HAP-1 (cell line): ENCODE measurements at regions of chr20 and their contacts with region 1.

Region 1: DNA sequence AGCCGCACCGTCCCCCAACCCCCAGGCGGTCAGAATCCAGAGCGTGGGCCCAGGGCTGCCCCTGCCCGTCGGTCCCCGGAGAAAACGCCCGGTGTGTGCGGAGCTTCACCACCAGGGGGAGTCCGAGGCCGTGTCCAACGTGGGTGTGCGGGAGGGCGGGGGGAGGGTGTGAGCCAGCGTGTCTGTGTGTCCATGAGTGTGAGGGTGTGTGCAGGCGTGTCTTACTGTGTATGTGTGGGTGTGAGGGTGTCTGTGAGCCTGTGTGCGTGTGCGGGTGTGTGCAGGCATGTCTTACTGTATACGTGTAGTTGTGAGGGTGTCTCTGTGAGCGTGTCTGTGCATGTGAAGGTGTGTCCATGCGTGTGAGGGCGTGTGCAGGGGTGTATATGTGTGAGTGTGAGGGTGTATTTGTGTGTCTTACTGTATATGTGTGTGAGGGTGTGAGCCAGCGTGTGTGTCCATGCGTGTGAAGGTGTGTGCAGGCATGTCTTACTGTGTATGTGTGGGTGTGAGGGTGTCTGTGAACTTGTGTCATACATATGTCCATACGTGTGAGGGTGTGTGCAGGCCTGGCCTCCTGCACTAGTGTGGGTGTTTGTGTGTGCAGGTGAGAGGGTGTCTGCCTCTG is 24.6 kb upstream of the GATA5 start:
- DNase-seq: peak; percentile 28 to 90
- H3K4me3 ChIP-seq: no peak overlapping the region
- H3K4me1 ChIP-seq: no peaks in the 10 kb centered on the region
- H3K27me3 ChIP-seq: no peaks in the 10 kb centered on the region

Region 2: DNA sequence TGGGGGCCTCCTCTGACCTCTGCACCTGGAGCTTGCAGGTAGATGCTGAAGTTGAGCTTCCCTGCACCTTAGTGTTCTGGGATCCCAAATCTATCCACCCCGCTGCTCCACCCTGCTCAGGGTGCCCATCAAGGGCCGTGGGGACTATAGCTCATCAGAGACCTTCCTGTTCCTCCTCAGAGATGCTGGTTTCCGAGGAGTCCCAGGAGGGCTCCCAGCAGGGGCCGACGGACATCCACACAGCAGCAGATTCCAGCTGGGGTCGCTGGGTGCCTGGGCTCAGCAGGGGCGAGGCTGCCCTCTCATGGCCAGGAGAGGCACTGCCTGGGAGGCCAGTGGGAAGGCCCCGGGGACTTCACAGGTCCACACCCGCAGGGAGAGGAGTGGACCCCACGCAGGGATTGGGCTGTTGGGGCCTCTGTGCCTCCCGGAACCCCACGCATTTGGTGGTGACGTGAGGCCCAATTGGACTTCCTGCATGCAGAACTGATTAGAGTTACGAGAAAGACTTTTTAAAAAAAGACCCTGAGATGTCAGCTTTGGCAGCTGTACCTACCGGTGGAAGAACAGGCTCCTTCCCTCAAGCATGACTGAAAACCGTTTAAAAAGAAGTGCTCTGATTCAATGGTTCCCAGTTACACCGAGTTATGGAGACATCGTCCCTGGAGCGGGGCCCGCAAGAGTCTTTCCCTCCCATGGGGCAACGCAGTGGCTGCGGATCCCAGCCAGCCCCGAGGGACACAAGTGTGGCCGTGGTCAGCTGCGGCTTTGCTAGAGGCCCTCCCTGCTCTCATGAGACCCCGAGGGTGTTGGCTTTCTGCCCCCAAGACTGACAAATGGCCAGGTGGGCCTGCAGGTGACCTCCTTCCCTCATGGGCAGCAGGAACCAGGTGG is 116.6 kb after region 1 on chr20:
- in situ Hi-C with region 1: loop called (anchors 5 kb)
- DNase-seq: peak; percentile 61 to 87
- H3K4me3 ChIP-seq: no peak overlapping the region
- H3K4me1 ChIP-seq: no peaks in the 10 kb centered on the region
- H3K27me3 ChIP-seq: no peaks in the 10 kb centered on the region; the same call in 1 of the 2 replicates

Region 3: GRCh38 chr20:63135411-63135810 is 635.1 kb after region 1 on chr20:
- in situ Hi-C with region 1: no loop called
- DNase-seq: peak in 1 of 2 experiments; percentile 25
- H3K4me3 ChIP-seq: no peak overlapping the region
- H3K4me1 ChIP-seq: no peaks in the 10 kb centered on the region
- H3K27me3 ChIP-seq: peaks cover 16% of the 10 kb centered on the region; the same call in 1 of the 2 replicates